ENCODE measurements at regions of chr7 and their contacts with region 1.

Region 1: GRCh38 chr7:136326045-136326609 is 349.0 kb upstream of the MTPN start:
- DNase-seq: no peak
- ATAC-seq: no peak
- H3K4me3 ChIP-seq: no peak overlapping the region
- H3K27ac ChIP-seq: no peak overlapping the region
- H3K4me1 ChIP-seq: no peaks in the 10 kb centered on the region
- H3K27me3 ChIP-seq: no peaks in the 10 kb centered on the region
- CTCF ChIP-seq: no peak

Region 2: DNA sequence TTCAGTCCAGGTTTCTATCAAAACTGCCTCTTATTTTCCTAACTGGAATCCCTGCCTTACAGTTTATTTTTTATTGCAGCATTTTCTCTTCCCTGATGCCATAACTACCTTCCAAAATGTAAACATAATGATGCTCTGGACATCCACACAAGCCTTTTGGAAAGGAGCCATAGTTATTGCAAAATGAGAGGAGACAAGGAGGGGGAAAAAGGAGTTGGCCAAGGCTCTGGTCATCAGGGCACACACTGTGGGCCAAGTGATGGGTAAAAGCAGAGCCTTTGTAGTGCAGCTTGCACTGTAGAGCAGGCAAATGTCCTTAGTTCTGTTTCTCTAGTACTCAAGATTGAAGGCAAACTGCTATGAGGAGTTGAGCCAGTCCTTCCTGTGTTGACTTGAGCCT is 59.7 kb before region 1 on chr7:
- intact Hi-C with region 1: loop called in 1 of 3 experiments (anchors 10 kb)
- DNase-seq: no peak
- ATAC-seq: no peak
- H3K4me3 ChIP-seq: no peak overlapping the region
- H3K27ac ChIP-seq: no peak overlapping the region
- H3K4me1 ChIP-seq: no peaks in the 10 kb centered on the region
- H3K27me3 ChIP-seq: no peaks in the 10 kb centered on the region
- CTCF ChIP-seq: no peak